ENCODE measurements at regions of chr12 and their contacts with region 1.

Region 1: DNA sequence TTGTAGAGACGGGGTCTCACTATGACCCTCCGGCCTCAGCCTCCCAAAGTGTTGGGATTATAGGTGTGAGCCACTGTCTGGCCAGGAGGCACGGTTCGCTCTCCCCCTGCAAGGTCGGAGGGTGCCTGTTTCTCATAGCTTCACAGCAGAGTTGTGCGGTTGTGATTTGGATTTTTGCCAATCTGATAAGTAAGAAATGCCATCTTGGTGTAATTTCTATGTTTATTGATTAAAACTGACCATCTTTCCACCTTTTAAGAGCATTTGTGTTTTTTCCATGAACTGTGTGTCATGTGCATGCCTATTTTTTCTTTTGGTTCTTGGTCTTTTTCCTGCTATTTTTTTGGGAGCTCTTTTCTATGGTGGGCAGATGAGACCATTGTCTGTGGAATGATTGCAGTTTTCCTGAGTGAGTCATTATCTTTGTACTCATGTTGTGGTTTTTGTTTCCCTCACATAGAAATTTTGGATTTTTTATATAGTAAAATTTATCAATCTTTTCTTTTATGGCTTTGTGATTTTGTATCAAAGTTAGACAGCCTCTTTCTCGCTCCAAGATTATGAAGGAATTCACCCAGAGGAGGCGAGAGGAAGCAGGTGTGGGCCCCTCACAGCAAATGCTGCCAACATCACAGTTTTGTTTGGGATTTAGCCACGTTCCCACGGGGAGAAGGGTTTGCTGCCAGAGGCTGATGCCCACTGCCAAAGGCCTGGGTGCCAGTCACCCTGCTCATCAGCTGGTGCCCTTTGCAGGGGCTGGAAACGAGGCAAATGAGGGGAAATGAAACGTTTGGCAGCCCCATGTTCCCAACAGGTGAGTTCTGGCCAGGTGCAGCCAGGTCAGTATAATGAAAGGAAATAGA is 47.2 kb downstream of the RFX4 start:
- DNase-seq: peak; percentile 30
- H3K4me3 Mint-ChIP-seq: no peak overlapping the region
- H3K27ac Mint-ChIP-seq: peak overlapping the region; percentile 78
- H3K4me1 Mint-ChIP-seq: peaks cover 88% of the 10 kb centered on the region
- H3K27me3 Mint-ChIP-seq: no peaks in the 10 kb centered on the region
- CTCF ChIP-seq: no peak

Region 2: GRCh38 chr12:106586803-106587684 is 43.0 kb before region 1 on chr12:
- CTCF ChIA-PET with region 1: no interaction called
- intact Hi-C with region 1: loop called (anchors 5 kb)
- DNase-seq: peak; percentile 35
- H3K4me3 Mint-ChIP-seq: peak overlapping the region; percentile 71
- H3K27ac Mint-ChIP-seq: no peak overlapping the region
- H3K4me1 Mint-ChIP-seq: peaks cover 20% of the 10 kb centered on the region
- H3K27me3 Mint-ChIP-seq: peaks cover 84% of the 10 kb centered on the region
- CTCF ChIP-seq: no peak

Region 3: GRCh38 chr12:106655577-106655976 is 25.5 kb after region 1 on chr12:
- CTCF ChIA-PET with region 1: no interaction called
- intact Hi-C with region 1: no loop called
- DNase-seq: no peak
- H3K4me3 Mint-ChIP-seq: no peak overlapping the region
- H3K27ac Mint-ChIP-seq: no peak overlapping the region
- H3K4me1 Mint-ChIP-seq: peaks cover 18% of the 10 kb centered on the region
- H3K27me3 Mint-ChIP-seq: no peaks in the 10 kb centered on the region
- CTCF ChIP-seq: no peak

Region 4: GRCh38 chr12:106774005-106774807 is 144.2 kb after region 1 on chr12 and contains the start of gene RIC8B:
- CTCF ChIA-PET with region 1: no interaction called
- intact Hi-C with region 1: loop called (anchors 5 kb)
- DNase-seq: peak; percentile 98
- H3K4me3 Mint-ChIP-seq: peak within 1 kb of the TSS; percentile 95
- H3K27ac Mint-ChIP-seq: peak within 1 kb of the TSS; percentile 97
- H3K4me1 Mint-ChIP-seq: peaks cover 47% of the 10 kb centered on the region
- H3K27me3 Mint-ChIP-seq: no peaks in the 10 kb centered on the region
- CTCF ChIP-seq: no peak
- total RNA-seq, gene RIC8B: 28.5 and 30.9 TPM in 2 replicates

Measured in Calu3 (cell line).